Panc1 (cell line): ENCODE measurements at regions of chr14 and their contacts with region 1.

Region 1: GRCh38 chr14:75132382-75133086 is 5.7 kb upstream of the NEK9 start:
- DNase-seq: peak; percentile 55
- ATAC-seq: peak; percentile 92
- H3K4me3 ChIP-seq: no peak overlapping the region
- H3K27ac ChIP-seq: no peak overlapping the region
- H3K4me1 ChIP-seq: peaks cover 4% of the 10 kb centered on the region; the same call in 1 of the 2 replicates
- H3K27me3 ChIP-seq: no peaks in the 10 kb centered on the region
- CTCF ChIP-seq: peak; percentile 56; the same call in 1 of the 2 replicates

Region 2: GRCh38 chr14:74824997-74825396 is 307.5 kb before region 1 on chr14:
- CTCF ChIA-PET with region 1: no interaction called
- POLR2A ChIA-PET with region 1: no interaction called
- in situ Hi-C with region 1: no loop called
- intact Hi-C with region 1: no loop called
- DNase-seq: no peak
- ATAC-seq: no peak
- H3K4me3 ChIP-seq: no peak overlapping the region
- H3K27ac ChIP-seq: no peak overlapping the region
- H3K4me1 ChIP-seq: no peaks in the 10 kb centered on the region
- H3K27me3 ChIP-seq: no peaks in the 10 kb centered on the region
- CTCF ChIP-seq: no peak

Region 3: DNA sequence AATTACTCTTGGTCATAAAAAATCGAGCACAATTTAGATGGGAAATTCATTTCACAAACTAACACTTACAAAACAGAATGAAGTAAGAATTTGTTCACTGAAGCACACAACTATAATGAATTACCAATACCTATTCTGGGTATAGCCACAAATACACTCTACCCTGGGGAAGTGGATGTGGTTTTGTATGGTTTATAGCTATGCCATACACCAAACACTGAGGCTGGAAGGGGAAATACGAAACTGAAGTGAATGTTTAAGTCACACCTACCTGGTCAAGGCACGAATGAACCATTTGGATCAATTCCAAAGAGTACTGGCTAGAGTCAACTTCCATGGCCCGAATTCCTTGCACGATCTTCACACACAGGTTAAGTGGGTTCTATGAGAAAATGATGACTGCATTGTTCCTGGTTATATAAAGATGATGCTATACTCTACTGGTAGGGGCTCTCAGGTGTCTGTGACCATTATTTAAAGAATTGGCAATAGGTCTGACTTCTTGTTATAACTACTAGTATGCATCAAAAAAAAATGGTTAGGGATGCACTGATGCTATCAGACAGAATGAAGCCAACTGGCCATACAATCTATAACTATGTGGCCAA is 18.5 kb before region 1 on chr14:
- CTCF ChIA-PET with region 1: no interaction called
- POLR2A ChIA-PET with region 1: no interaction called
- in situ Hi-C with region 1: no loop called
- intact Hi-C with region 1: no loop called
- DNase-seq: no peak
- ATAC-seq: no peak
- H3K4me3 ChIP-seq: no peak overlapping the region
- H3K27ac ChIP-seq: no peak overlapping the region
- H3K4me1 ChIP-seq: no peaks in the 10 kb centered on the region
- H3K27me3 ChIP-seq: no peaks in the 10 kb centered on the region
- CTCF ChIP-seq: no peak

Region 4: GRCh38 chr14:75383721-75384120 is 251.2 kb after region 1 on chr14:
- CTCF ChIA-PET with region 1: no interaction called
- POLR2A ChIA-PET with region 1: interaction called, 11 read pairs
- in situ Hi-C with region 1: no loop called
- intact Hi-C with region 1: no loop called
- DNase-seq: no peak
- ATAC-seq: no peak
- H3K4me3 ChIP-seq: no peak overlapping the region
- H3K27ac ChIP-seq: no peak overlapping the region
- H3K4me1 ChIP-seq: no peaks in the 10 kb centered on the region
- H3K27me3 ChIP-seq: peaks cover 4% of the 10 kb centered on the region
- CTCF ChIP-seq: no peak

Region 5: DNA sequence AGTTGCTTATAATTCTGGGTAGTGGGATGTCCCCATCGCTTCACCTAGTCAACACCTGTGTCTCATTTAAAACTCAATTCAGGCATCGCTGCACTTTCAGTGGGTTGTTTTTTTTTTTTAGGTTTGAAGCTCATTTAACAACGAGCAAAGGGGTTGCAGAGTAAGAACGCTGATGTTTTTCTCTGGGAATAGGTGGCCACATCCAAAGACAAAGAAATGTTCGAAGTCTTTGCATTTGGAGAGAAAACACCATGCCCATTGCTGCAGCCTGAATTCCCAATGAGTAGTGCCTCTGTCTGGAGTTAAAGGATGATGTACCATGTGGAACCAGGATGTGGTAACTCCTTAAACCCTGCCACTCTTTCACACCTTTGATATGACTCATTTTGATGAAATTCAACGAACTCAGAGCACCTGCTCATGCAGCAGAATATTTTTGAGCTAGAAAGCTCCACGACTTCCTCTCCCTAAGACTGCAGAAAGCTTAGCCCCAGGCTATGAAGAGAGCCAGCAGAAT is 354.7 kb after region 1 on chr14:
- CTCF ChIA-PET with region 1: no interaction called
- POLR2A ChIA-PET with region 1: no interaction called
- in situ Hi-C with region 1: no loop called
- intact Hi-C with region 1: loop called (anchors 10 kb)
- DNase-seq: no peak
- ATAC-seq: no peak
- H3K4me3 ChIP-seq: no peak overlapping the region
- H3K27ac ChIP-seq: no peak overlapping the region
- H3K4me1 ChIP-seq: no peaks in the 10 kb centered on the region
- H3K27me3 ChIP-seq: no peaks in the 10 kb centered on the region
- CTCF ChIP-seq: no peak

Region 6: GRCh38 chr14:75560962-75561432 is 428.5 kb after region 1 on chr14:
- CTCF ChIA-PET with region 1: interaction called, 15 read pairs
- POLR2A ChIA-PET with region 1: no interaction called
- in situ Hi-C with region 1: no loop called
- intact Hi-C with region 1: no loop called
- DNase-seq: peak; percentile 78
- ATAC-seq: peak; percentile 97
- H3K4me3 ChIP-seq: no peak overlapping the region
- H3K27ac ChIP-seq: no peak overlapping the region
- H3K4me1 ChIP-seq: peaks cover 4% of the 10 kb centered on the region; the same call in 1 of the 2 replicates
- H3K27me3 ChIP-seq: no peaks in the 10 kb centered on the region
- CTCF ChIP-seq: peak; percentile 86